ENCODE measurements at regions of chr3 and their contacts with region 1.

Region 1: GRCh38 chr3:150850191-150850590 is 55.0 kb downstream of the MINDY4B start:
- DNase-seq: no peak
- ATAC-seq: no peak
- H3K4me3 ChIP-seq: no peak overlapping the region
- H3K4me3 Mint-ChIP-seq: no peak overlapping the region
- H3K27ac ChIP-seq: no peak overlapping the region
- H3K27ac Mint-ChIP-seq: no peak overlapping the region
- H3K4me1 ChIP-seq: no peaks in the 10 kb centered on the region
- H3K4me1 Mint-ChIP-seq: no peaks in the 10 kb centered on the region
- H3K27me3 ChIP-seq: peaks cover 0 to 7% of the 10 kb centered on the region in 2 experiments
- H3K27me3 Mint-ChIP-seq: peaks cover 9 to 11% of the 10 kb centered on the region in 2 donors

Region 2: GRCh38 chr3:150806185-150806835 is 43.9 kb before region 1 on chr3:
- CTCF ChIA-PET with region 1: no interaction called
- POLR2A ChIA-PET with region 1: interaction called in 1 of 2 experiments, 12 read pairs
- DNase-seq: no peak
- ATAC-seq: no peak
- H3K4me3 ChIP-seq: no peak overlapping the region
- H3K4me3 Mint-ChIP-seq: no peak overlapping the region
- H3K27ac ChIP-seq: no peak overlapping the region
- H3K27ac Mint-ChIP-seq: no peak overlapping the region
- H3K4me1 ChIP-seq: no peaks in the 10 kb centered on the region
- H3K4me1 Mint-ChIP-seq: no peaks in the 10 kb centered on the region
- H3K27me3 ChIP-seq: no peaks in the 10 kb centered on the region
- H3K27me3 Mint-ChIP-seq: peaks cover 0 to 9% of the 10 kb centered on the region in 2 donors

Region 3: DNA sequence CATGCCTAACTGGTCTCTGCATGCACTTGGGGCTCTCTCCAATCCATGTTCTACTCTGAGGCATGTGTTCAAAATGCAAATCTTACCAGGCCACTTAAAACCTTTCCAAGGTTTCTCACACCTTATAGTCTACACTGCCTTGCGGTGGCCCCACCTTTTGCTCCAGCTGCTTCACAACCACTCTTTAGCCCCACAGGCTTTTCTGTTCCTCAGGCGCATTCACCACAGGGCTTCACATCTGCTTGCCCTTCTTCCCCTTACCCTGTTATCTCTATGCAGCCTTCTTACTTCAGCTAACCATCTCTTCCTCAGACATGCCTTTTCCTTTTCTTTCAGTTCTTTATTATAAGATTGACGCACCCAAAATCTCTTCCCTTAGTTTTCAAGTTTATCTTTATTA is 17.2 kb after region 1 on chr3:
- CTCF ChIA-PET with region 1: no interaction called
- POLR2A ChIA-PET with region 1: no interaction called
- DNase-seq: peak in 1 of 35 experiments; percentile 4
- ATAC-seq: no peak
- H3K4me3 ChIP-seq: no peak overlapping the region
- H3K4me3 Mint-ChIP-seq: no peak overlapping the region
- H3K27ac ChIP-seq: no peak overlapping the region
- H3K27ac Mint-ChIP-seq: no peak overlapping the region
- H3K4me1 ChIP-seq: no peaks in the 10 kb centered on the region
- H3K4me1 Mint-ChIP-seq: peaks cover 4 to 7% (median 6%) of the 10 kb centered on the region in 3 donors
- H3K27me3 ChIP-seq: no peaks in the 10 kb centered on the region
- H3K27me3 Mint-ChIP-seq: peaks cover 12 to 15% of the 10 kb centered on the region in 2 donors

Region 4: DNA sequence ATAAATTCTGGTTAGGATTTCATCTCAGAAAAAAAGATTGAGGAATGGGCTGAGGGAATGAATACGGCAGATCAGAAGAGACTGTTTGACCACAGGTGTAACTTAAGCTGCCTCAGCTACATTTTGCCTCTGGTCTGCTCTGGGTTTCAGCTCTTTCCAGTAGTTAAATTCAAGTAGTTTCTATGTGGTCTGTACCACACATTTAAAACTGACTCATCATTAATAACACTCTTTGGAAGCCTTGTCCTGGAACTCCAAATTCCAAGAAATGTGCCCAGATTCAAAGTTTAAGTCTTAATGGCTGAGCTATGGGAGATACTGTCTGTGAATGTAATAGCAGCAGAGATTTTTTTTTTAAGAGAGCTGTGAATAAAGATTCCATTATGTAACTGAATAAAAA is 743.7 kb after region 1 on chr3:
- CTCF ChIA-PET with region 1: no interaction called
- POLR2A ChIA-PET with region 1: no interaction called
- DNase-seq: no peak
- ATAC-seq: no peak
- H3K4me3 ChIP-seq: no peak overlapping the region
- H3K4me3 Mint-ChIP-seq: no peak overlapping the region
- H3K27ac ChIP-seq: no peak overlapping the region
- H3K27ac Mint-ChIP-seq: no peak overlapping the region
- H3K4me1 ChIP-seq: no peaks in the 10 kb centered on the region
- H3K4me1 Mint-ChIP-seq: no peaks in the 10 kb centered on the region
- H3K27me3 ChIP-seq: no peaks in the 10 kb centered on the region
- H3K27me3 Mint-ChIP-seq: no peaks in the 10 kb centered on the region